ENCODE measurements at regions of chr1 and their contacts with region 1.

Region 1: DNA sequence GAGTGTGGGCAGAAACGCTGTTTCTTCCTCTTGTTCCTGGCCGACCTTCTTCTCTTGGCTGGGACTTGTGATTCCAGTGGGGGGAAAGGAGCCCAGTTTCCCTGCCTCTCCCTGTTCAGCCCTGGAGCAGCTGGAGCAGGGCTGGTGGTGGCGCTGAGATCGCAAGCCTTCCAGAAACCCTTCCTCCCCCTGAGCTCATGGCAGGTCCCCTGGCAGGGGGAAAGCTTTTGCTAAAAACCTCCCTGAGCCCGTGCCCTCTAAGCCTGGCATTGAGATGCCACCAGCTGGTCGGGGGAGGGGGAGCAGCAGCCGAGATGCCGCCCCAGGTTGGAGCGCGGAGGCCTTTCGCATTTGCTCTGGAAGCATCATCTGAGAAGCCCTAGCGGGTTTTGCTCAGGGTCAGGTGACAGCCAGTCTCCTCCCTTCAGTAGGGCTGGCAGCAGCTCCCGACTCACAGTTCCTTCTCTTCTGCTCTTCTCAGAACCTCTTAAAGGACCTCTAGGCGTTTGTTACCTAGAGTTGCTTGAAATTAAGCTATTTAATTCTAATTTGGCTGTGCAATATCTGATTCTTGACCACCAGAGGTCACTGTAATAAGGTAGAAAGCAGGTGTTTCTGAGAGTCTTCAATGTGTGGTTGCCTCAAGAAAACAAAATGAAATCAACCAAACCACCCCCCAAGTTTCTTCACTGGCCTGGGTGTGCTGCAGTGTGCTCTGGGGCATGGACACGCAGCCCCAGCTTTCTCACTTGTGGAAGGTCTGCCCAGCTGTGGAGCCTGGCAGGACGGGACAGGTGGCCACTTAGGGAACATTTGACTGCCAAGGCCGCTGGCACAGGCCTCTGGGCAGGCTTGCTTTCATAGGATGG is 257.3 kb downstream of the CAMTA1 start:
- DNase-seq: peak; percentile 38

Region 2: DNA sequence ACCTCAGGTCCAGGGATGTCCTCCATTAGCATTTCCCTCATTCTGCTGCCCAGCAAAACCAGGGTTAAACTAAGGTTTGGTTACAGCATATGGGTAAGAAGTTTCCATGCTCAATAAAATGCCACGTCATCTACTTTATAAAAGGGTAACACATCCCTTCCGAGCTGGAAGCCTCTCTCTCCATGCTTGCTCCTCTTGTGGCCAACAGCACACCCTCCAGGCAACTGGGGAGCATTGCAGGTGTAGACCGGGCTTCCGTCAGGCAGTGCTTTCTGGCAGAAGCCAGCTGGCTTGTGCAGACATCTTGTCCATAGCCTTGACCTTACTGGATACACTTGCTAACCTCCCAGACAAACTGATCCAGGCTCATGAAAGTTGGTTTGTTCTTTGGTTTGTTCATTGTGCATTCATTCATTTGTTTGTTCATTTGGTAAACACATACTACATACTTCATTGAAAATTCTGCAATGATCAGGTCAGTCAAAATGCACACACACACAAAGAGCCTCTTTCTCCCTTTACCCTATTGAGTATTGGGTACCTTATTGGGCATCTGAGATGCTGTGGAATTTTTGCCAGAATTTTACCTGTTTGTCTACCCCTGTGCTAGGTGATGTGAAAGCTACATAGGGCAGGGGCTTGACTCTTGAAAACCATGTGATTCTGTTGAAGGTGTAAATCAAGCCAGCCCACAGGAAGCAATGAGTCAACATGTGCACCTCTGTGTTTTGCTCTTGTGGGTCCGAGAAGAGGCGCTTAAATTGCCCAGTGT is 165.5 kb after region 1 on chr1:
- CTCF ChIA-PET with region 1: interaction called, 33 read pairs
- POLR2A ChIA-PET with region 1: no interaction called
- DNase-seq: peak; percentile 79

Measured in HEK293T (cell line).